CD8-positive, alpha-beta memory T cell (primary cell): ENCODE measurements at regions of chr19 and their contacts with region 1.

Region 1: DNA sequence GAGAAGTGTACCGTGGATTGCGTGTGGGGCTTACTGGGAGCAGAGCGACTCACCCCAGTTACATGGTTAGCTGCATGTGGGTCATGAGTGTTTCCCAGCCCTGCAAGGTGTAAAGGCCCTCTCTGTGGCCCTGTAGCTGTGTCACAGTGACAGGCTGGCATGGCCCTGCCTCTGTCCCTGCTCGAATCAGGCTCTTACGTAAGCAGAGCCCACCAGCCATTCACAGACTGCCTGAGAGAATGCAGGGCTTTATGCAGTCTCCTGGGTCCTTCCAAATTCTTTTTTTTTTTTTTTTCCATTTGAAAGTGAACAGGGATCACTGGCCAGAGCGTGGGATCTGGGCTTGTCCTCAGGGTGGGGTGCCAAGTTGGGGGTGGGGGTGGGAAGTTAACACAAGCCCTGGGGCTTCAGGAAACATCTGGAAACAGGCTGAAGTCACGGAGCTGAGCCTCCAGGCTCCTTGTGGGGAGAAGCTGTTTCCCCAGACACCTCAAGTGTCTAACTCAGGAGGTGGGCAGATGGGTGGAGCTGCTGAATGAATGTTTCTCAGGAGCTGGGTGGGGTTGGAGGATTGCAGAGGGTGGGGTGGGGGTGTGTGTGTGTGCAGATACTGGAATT is 13.4 kb downstream of the TECR start:
- DNase-seq: no peak
- H3K4me3 ChIP-seq: no peak overlapping the region
- H3K4me3 Mint-ChIP-seq: no peak overlapping the region
- H3K27ac ChIP-seq: peak overlapping the region; percentile 9
- H3K27ac Mint-ChIP-seq: no peak overlapping the region
- H3K4me1 ChIP-seq: no peaks in the 10 kb centered on the region
- H3K4me1 Mint-ChIP-seq: peaks cover 25 to 61% (median 25%) of the 10 kb centered on the region in 3 donors
- H3K27me3 ChIP-seq: no peaks in the 10 kb centered on the region
- H3K27me3 Mint-ChIP-seq: no peaks in the 10 kb centered on the region

Region 2: DNA sequence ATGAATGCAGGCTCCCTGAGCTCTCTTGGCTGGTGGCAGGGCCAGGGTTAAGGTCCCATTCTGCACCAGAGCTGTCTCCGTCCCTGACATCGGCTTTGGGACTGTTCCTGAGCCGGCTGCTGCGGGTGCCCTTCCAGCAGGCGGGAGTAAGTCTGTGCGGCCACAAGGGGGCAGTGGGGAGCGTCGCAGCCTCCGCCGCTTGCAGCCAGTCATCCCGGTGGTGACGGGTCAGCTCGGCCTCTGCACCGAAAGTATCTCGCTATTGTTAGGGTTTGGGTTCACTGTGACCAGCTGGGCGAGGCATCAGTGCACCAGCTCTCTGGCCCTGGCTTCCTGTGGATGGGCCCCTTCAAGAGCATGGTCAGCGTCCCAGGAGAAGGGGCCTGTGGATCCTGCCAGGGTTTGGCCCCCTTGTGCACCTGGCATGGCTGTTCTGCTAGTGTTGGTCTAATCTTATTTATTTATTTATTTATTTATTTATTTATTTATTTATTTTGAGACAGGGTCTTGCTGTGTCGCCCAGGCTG is 13.9 kb after region 1 on chr19:
- CTCF ChIA-PET with region 1: interaction called, 16 read pairs
- POLR2A ChIA-PET with region 1: no interaction called
- DNase-seq: peak; percentile 61 to 70 (median 62)
- H3K4me3 ChIP-seq: peak overlapping the region; percentile 35
- H3K4me3 Mint-ChIP-seq: peak overlapping the region; percentile 8 to 82 (median 72)
- H3K27ac ChIP-seq: no peak overlapping the region
- H3K27ac Mint-ChIP-seq: peak overlapping the region in 7 of 8 donors; percentile 68 to 97 (median 92)
- H3K4me1 ChIP-seq: peaks cover 48% of the 10 kb centered on the region
- H3K4me1 Mint-ChIP-seq: peaks cover 31 to 68% (median 44%) of the 10 kb centered on the region in 3 donors
- H3K27me3 ChIP-seq: no peaks in the 10 kb centered on the region
- H3K27me3 Mint-ChIP-seq: no peaks in the 10 kb centered on the region

Region 3: GRCh38 chr19:16262618-16263017 is 1719.8 kb after region 1 on chr19:
- CTCF ChIA-PET with region 1: no interaction called
- POLR2A ChIA-PET with region 1: no interaction called
- DNase-seq: no peak
- H3K4me3 ChIP-seq: peak overlapping the region; percentile 37
- H3K4me3 Mint-ChIP-seq: peak overlapping the region in 6 of 7 donors; percentile 41 to 81 (median 62)
- H3K27ac ChIP-seq: no peak overlapping the region
- H3K27ac Mint-ChIP-seq: peak overlapping the region in 5 of 8 donors; percentile 40 to 76 (median 58)
- H3K4me1 ChIP-seq: peaks cover 72% of the 10 kb centered on the region
- H3K4me1 Mint-ChIP-seq: peaks cover 57 to 74% (median 71%) of the 10 kb centered on the region in 3 donors
- H3K27me3 ChIP-seq: no peaks in the 10 kb centered on the region
- H3K27me3 Mint-ChIP-seq: peaks cover 0 to 4% of the 10 kb centered on the region in 2 donors